ENCODE measurements at regions of chr2 and their contacts with region 1.

Region 1: GRCh38 chr2:30208452-30208851 is 22.9 kb upstream of the LBH start:
- DNase-seq: peak in 8 of 10 donors; percentile 11 to 64 (median 36)
- ATAC-seq: peak; percentile 21 to 69
- H3K4me3 Mint-ChIP-seq: peak overlapping the region; percentile 19 to 79 (median 58)
- H3K27ac Mint-ChIP-seq: peak overlapping the region in 9 of 10 donors; percentile 81 to 95 (median 93)
- H3K4me1 Mint-ChIP-seq: peaks cover 16 to 30% (median 25%) of the 10 kb centered on the region in 4 donors
- H3K27me3 Mint-ChIP-seq: no peaks in the 10 kb centered on the region

Region 2: GRCh38 chr2:30146438-30147147 is 61.9 kb before region 1 on chr2 and contains the start of gene YPEL5:
- POLR2A ChIA-PET with region 1: interaction called, 18 read pairs
- DNase-seq: peak; percentile 95 to 100 (median 100)
- ATAC-seq: peak; percentile 81 to 82
- H3K4me3 Mint-ChIP-seq: peak within 1 kb of the TSS; percentile 81 to 95 (median 90)
- H3K27ac Mint-ChIP-seq: peak within 1 kb of the TSS; percentile 99 to 100 (median 100)
- H3K4me1 Mint-ChIP-seq: peaks cover 25 to 54% (median 50%) of the 10 kb centered on the region in 4 donors
- H3K27me3 Mint-ChIP-seq: no peaks in the 10 kb centered on the region
- polyA plus RNA-seq, gene YPEL5: 88.3 to 155 (median 103) TPM

Region 3: DNA sequence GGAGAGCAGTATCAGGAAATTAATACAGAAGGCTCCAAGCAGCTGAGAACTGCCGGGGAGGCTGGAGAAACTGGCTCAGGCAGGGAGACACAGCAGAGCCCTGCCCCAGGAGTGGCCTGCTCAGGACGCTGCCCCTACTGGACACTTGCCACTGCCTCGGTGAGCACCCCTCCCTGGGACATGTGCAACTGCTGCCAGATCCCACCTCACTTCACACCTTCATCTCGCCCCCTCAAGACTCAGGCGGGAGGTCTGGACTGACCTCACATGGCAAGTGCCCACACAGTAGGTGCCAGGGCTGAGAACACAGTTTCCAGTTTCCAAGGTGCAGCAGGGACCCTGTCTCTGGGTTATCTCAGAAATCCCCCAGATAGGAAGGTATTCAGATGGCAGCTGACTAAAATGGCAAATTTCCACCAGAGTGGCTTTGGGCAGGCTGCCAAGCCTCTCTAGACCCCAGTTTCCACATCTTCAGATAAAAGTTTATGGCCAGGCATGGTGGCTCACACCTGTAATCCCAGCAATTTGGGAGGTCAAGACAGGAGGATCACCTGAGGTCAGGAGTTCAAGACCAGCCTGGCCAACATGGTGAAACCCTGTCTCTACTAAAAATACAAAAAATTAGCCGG is 10.8 kb before region 1 on chr2:
- POLR2A ChIA-PET with region 1: no interaction called
- DNase-seq: no peak
- ATAC-seq: no peak
- H3K4me3 Mint-ChIP-seq: no peak overlapping the region
- H3K27ac Mint-ChIP-seq: peak overlapping the region in 2 of 10 donors; percentile 4 to 45
- H3K4me1 Mint-ChIP-seq: peaks cover 1 to 9% (median 3%) of the 10 kb centered on the region in 4 donors
- H3K27me3 Mint-ChIP-seq: peaks cover 0 to 5% (median 0%) of the 10 kb centered on the region in 5 donors

Region 4: GRCh38 chr2:30225131-30225762 is 16.8 kb after region 1 on chr2:
- POLR2A ChIA-PET with region 1: interaction called, 323 read pairs
- DNase-seq: peak; percentile 29 to 74 (median 40)
- ATAC-seq: peak; percentile 78
- H3K4me3 Mint-ChIP-seq: peak overlapping the region; percentile 89 to 99 (median 95)
- H3K27ac Mint-ChIP-seq: peak overlapping the region; percentile 97 to 100 (median 99)
- H3K4me1 Mint-ChIP-seq: peaks cover 41 to 87% (median 84%) of the 10 kb centered on the region in 4 donors
- H3K27me3 Mint-ChIP-seq: no peaks in the 10 kb centered on the region